ENCODE measurements at regions of chr7 and their contacts with region 1.

Region 1: GRCh38 chr7:138738551-138739335 is 37.6 kb upstream of the SVOPL start:
- DNase-seq: peak; percentile 75 to 90
- H3K4me3 ChIP-seq: no peak overlapping the region
- H3K27ac ChIP-seq: no peak overlapping the region
- H3K4me1 ChIP-seq: peaks cover 0 to 5% (median 0%) of the 10 kb centered on the region in 4 experiments; a peak in 2 of 7 replicates
- H3K27me3 ChIP-seq: no peaks in the 10 kb centered on the region
- CTCF ChIP-seq: peak; percentile 80 to 95 (median 86)
- EP300 ChIP-seq: no peak
- POLR2A ChIP-seq: no peak
- RAD21 ChIP-seq: peak; percentile 98 to 100

Region 2: DNA sequence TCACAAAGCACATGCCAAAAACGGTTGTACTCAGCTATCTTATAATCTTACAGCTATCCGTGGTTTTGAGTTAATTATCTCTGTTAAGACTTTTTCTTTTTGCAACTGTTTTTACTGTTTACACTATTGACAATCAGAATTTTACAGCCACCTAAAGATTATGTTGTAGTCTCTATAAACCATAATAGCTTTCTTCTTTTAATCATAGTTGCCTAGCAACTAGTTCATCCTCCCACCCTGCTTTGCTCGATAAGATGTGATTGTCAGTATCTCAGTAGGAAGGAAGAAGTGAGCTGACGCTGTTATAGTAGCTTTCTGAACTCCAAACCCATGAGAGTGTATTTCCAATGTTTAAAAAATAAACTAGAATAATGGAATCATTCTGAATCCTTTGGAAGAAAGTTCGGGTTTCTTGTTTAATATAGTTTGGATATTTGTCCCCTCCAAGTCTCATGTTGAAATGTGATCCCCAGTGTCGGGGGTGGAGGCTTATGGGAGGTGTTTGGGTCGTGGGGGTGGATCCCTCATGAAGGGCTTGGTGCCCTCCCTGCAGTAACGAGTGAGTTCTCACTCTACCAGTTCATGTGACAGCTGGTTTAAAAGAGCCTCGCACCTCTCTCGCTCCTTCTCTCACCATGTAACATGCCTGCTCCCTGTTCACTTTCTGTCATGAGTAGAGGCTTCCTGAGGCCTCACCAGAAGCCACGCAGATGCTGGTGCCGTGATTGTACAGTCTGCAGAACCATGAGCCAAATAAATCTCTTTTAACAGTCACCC is 105.7 kb before region 1 on chr7:
- CTCF ChIA-PET with region 1: interaction called, 10 read pairs
- POLR2A ChIA-PET with region 1: no interaction called
- DNase-seq: no peak
- H3K4me3 ChIP-seq: no peak overlapping the region
- H3K27ac ChIP-seq: no peak overlapping the region
- H3K4me1 ChIP-seq: no peaks in the 10 kb centered on the region; a peak in 1 of 7 replicates
- H3K27me3 ChIP-seq: no peaks in the 10 kb centered on the region
- CTCF ChIP-seq: no peak
- EP300 ChIP-seq: no peak
- POLR2A ChIP-seq: no peak
- RAD21 ChIP-seq: no peak

Region 3: DNA sequence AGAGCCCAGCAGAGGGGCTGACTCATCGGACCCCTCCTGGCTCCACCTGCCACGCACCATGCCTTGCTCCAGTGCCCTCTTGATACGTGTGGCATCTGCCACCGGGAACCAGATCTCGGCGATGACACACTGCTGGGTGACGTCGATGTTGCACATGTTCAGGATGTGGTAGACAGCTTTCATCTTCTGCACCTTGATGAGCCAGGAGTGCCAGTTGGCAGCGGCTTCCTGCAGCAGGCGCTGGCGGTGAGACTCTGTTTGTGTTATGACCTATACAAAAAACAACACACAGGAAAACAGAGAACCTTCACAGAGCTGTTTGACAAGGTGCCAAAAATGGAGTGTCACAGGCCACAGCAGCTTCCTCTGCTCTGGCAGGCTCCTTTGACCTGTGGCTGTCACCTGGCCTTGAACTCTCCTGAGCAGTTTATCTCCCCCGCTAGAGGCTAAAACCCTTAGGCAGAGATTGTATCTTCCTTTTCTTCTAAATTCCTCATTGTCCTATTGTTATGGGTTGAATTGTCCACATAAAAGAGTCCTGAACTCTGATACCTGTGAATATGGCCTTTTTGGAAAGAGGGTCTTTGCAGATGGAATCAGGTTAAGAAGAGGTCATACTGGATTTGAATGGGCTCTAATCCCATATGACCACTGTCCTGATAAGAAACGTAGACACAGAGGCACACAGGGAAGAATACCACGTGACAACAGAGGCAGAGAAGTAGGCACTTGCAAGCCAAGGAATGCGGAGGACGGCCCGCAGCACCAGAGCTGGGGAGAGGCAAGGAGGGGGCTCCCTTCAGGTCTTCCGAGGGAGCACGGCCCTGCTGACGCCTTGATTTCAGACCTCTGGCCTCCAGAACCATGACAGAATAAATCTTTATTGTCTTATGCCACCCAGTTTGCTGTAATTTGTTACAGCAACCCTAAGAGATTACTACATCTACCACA is 14.1 kb after region 1 on chr7:
- CTCF ChIA-PET with region 1: interaction called, 20 read pairs
- POLR2A ChIA-PET with region 1: no interaction called
- DNase-seq: no peak
- H3K4me3 ChIP-seq: no peak overlapping the region
- H3K27ac ChIP-seq: no peak overlapping the region
- H3K4me1 ChIP-seq: peaks cover 7 to 24% (median 11%) of the 10 kb centered on the region in 4 experiments
- H3K27me3 ChIP-seq: no peaks in the 10 kb centered on the region
- CTCF ChIP-seq: no peak
- EP300 ChIP-seq: no peak
- POLR2A ChIP-seq: no peak
- RAD21 ChIP-seq: no peak; a peak in 1 of 4 replicates